Right ventricle myocardium inferior (tissue), 1 donor: ENCODE measurements at regions of chr3 and their contacts with region 1.

Region 1: DNA sequence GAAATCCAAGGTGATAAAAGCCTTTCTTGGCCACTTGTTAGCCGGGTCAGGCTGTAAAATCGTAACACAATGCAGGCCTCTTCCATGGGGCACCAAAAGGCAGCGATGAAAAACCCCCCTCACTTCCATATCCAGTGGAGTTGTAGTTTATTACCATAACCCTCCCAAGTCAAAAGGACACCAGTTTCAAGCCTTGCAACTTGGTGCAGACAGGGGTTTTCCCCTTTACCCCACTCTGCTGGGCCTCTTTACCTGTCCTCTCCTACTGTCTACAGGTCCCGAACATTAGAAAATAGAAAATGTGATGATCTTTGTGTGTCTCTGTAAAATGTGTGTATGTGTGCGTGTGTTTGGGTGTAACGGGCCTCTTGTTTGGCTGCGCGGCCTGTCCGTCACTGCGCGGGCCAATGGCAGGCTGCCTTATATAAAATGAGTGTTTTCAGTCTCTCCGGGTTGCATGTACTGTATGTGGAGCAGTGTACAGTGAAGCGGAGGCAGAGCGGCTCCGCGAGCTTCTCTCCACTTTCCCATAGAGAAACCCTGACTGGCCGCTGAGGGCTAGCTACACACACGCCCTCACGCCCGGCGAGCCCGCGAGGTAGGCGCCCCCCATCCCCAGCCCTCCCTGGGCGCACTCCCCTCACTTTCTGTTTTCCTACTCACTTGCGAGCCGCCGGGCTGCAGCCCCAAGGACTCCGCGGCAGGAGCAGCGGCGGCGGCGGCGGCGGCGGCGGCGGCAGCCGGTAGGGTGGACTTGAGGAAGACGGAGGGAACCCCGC is at the start of gene BBX:
- DNase-seq: peak; percentile 94
- ATAC-seq: peak; percentile 98
- total RNA-seq, gene BBX: 37.7 TPM

Region 2: GRCh38 chr3:107429320-107430181 is 93.1 kb before region 1 on chr3:
- intact Hi-C with region 1: loop called (anchors 2 kb)
- DNase-seq: peak; percentile 84
- ATAC-seq: peak; percentile 88